ENCODE measurements at regions of chr4 and their contacts with region 1.

Region 1: DNA sequence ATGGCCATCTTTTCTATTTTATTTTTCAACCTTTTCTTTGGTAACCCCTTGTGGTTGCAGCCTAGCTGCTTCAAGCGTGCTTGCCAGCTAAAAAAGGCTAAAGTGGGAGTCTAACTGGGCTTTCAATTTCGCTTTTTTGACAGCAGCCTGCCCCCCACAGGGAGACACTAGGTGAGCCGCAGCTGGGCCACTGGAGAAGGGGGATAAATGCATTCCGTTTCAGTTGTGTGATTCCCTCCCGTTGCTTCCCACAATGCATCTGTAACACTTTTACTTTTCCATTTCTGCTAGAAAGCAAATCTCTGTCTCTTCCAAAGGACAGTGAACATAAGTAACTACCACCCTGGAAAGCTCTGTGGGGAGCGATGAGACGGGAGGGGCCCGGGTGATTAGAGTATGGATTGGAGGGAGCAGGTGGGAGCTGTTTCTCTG is 86.3 kb upstream of the RAPGEF2 start:
- DNase-seq: no peak
- H3K4me3 ChIP-seq: peak overlapping the region in 2 of 4 donors; percentile 18 to 19
- H3K27ac ChIP-seq: peak overlapping the region in 3 of 4 donors; percentile 49 to 58 (median 49)
- H3K4me1 ChIP-seq: peaks cover 0 to 11% (median 5%) of the 10 kb centered on the region in 4 donors
- H3K27me3 ChIP-seq: no peaks in the 10 kb centered on the region
- CTCF ChIP-seq: no peak
- EP300 ChIP-seq: no peak
- POLR2A ChIP-seq: no peak

Region 2: DNA sequence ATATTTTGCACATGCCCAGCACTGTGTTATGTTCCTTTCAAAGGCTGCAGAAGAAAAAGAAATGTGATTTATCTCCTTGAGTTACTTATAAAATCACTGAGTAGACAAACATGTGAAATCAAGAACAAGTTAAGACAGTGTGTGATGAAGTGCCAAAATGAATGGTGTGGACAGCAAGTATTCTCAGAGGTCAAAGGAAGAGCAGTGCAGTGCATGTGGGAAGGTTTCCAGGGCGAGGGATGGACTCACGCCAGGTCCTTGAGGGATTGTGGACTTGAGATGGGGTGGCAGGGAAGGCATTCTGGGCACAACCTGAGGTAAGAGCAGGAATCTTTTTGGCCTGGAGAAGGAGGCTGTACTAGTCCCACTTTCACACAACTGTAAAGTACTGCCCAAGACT is 132.3 kb before region 1 on chr4:
- intact Hi-C with region 1: loop called (anchors 10 kb)
- DNase-seq: peak; percentile 83
- H3K4me3 ChIP-seq: no peak overlapping the region
- H3K27ac ChIP-seq: peak overlapping the region in 3 of 4 donors; percentile 24 to 47 (median 45)
- H3K4me1 ChIP-seq: peaks cover 0 to 18% (median 11%) of the 10 kb centered on the region in 4 donors
- H3K27me3 ChIP-seq: no peaks in the 10 kb centered on the region
- CTCF ChIP-seq: no peak
- EP300 ChIP-seq: no peak
- POLR2A ChIP-seq: no peak

Measured in sigmoid colon (tissue), 7 donors.